ENCODE measurements at regions of chr1 and their contacts with region 1.

Region 1: DNA sequence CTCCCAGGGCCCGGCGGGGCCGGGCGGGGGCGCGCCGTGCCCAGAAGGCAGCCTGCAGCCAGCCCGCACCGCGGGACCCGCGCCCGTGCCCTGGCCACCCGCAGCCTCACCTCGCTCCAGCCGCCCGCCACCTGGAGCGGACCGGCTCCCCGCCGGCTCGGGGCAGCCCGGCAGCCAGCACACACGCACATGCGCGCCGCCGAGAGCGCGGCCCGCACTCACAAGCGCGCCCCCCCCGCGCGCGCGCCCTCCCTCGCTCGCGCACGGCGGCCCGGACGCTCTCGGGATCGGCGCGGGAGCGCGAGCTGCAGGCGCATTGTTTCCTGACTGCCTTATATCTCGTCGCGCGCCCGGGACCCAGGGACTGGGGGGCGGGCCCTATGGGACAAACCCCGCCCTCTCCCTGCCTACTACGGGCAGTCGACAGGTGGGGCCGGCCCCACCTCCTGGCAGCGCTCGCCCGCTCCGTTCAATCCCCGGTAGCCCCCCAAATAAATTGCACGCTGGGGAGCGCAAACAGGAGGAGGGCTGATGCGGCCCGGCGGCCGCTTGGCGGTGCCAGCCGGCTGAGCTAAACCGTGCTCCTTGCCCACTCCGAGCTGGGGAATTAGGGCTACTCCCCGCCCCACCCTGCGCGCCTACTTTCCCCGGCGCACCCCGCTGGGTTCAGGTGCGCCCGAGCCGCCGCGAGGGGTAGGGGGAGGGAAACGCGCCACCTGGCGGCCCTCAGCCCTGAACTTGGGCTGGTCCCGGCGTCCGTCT is at the start of gene MYCL:
- DNase-seq: peak; percentile 13 to 77 (median 44)
- ATAC-seq: peak; percentile 81 to 83 (median 82)
- H3K4me3 ChIP-seq: peak within 1 kb of the TSS; percentile 63 to 78
- H3K4me3 Mint-ChIP-seq: peak within 1 kb of the TSS; percentile 67 to 74 (median 70)
- H3K27ac ChIP-seq: no peak within 1 kb of the TSS
- H3K27ac Mint-ChIP-seq: no peak within 1 kb of the TSS
- H3K4me1 ChIP-seq: peaks cover 5 to 17% of the 10 kb centered on the region in 2 experiments
- H3K4me1 Mint-ChIP-seq: peaks cover 0 to 6% (median 5%) of the 10 kb centered on the region in 3 donors
- H3K27me3 ChIP-seq: peaks cover 25 to 60% of the 10 kb centered on the region in 2 experiments
- H3K27me3 Mint-ChIP-seq: peaks cover 44 to 59% of the 10 kb centered on the region in 2 donors
- total RNA-seq, gene MYCL: 0.13 to 0.38 (median 0.22) TPM

Region 2: GRCh38 chr1:39816415-39817090 is 85.3 kb before region 1 on chr1:
- CTCF ChIA-PET with region 1: interaction called, 3 to 10 read pairs
- POLR2A ChIA-PET with region 1: interaction called in 1 of 2 experiments, 3 read pairs
- DNase-seq: peak in 33 of 35 experiments; percentile 11 to 76 (median 44)
- ATAC-seq: peak; percentile 71 to 74 (median 72)
- H3K4me3 ChIP-seq: peak overlapping the region in 1 of 2 donors; percentile 23
- H3K4me3 Mint-ChIP-seq: peak overlapping the region; percentile 67 to 83 (median 78)
- H3K27ac ChIP-seq: no peak overlapping the region
- H3K27ac Mint-ChIP-seq: no peak overlapping the region
- H3K4me1 ChIP-seq: peaks cover 0 to 17% of the 10 kb centered on the region in 2 experiments
- H3K4me1 Mint-ChIP-seq: peaks cover 5 to 17% (median 10%) of the 10 kb centered on the region in 3 donors
- H3K27me3 ChIP-seq: peaks cover 0 to 48% of the 10 kb centered on the region in 2 experiments
- H3K27me3 Mint-ChIP-seq: peaks cover 13 to 21% of the 10 kb centered on the region in 2 donors

Measured in T-cell (primary cell).